ENCODE measurements at regions of chr10 and their contacts with region 1.

Region 1: GRCh38 chr10:89373916-89374711 is 3.7 kb upstream of the IFIT1B start:
- DNase-seq: peak; percentile 47 to 97 (median 89)

Region 2: DNA sequence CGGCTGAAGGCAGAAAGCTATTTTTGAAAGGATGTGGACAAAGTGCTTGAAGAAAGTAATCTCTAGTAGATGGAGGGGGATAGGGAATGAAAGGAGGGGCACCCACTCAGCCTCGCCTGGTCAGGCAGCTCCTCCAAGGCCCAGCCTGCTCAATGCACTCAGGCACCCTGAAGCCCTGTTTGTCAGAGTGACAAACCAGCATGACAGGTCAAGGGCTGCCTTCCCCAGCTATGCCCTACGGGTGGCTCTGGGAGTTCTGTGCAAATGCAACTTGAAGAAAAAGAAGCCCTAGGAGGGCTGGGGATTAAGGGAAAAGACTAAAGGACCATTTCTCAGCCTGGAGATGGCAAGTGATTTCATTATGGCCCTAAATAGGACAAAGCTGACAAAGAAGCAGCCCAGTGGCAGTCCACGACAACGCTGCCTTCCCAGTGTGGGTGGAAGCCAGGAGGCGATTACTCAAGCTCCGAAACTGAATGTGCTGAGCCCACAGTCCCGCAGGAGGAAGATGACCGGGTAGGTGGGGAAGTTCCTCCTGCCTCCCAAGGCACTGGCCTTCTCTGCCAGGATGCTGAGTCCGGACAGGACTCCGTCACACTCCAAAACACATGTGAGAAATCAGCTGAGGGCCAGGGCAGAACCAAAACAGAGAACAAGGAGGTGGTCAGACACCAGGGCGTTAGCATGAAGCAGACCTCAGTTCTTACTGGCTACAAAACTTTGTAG is 138.9 kb before region 1 on chr10:
- intact Hi-C with region 1: no loop called
- DNase-seq: peak; percentile 14 to 85 (median 62)

Region 3: GRCh38 chr10:89342206-89342958 is 31.7 kb before region 1 on chr10:
- intact Hi-C with region 1: loop called (anchors 2 kb)
- DNase-seq: peak; percentile 59 to 97 (median 88)